Right lobe of liver (tissue), 6 donors: ENCODE measurements at regions of chr3 and their contacts with region 1.

Region 1: GRCh38 chr3:187319699-187320302 is 28.3 kb upstream of the MASP1 start:
- DNase-seq: peak in 2 of 3 donors; percentile 57 to 73
- ATAC-seq: peak; percentile 85 to 94 (median 92)
- H3K4me3 ChIP-seq: no peak overlapping the region
- H3K27ac ChIP-seq: no peak overlapping the region
- H3K4me1 ChIP-seq: peaks cover 0 to 4% (median 2%) of the 10 kb centered on the region in 4 donors
- H3K27me3 ChIP-seq: no peaks in the 10 kb centered on the region
- CTCF ChIP-seq: peak; percentile 75 to 94 (median 76)
- POLR2A ChIP-seq: no peak

Region 2: GRCh38 chr3:187210545-187211327 is 109.1 kb before region 1 on chr3:
- intact Hi-C with region 1: loop called in 1 of 2 experiments (anchors 10 kb)
- DNase-seq: no peak
- ATAC-seq: peak in 1 of 4 donors; percentile 18
- H3K4me3 ChIP-seq: no peak overlapping the region
- H3K27ac ChIP-seq: peak overlapping the region in 1 of 3 donors; percentile 20
- H3K4me1 ChIP-seq: no peaks in the 10 kb centered on the region
- H3K27me3 ChIP-seq: no peaks in the 10 kb centered on the region
- CTCF ChIP-seq: no peak
- POLR2A ChIP-seq: no peak

Region 3: GRCh38 chr3:187610981-187611511 is 291.2 kb after region 1 on chr3:
- intact Hi-C with region 1: loop called in 1 of 2 experiments (anchors 10 kb)
- DNase-seq: no peak
- ATAC-seq: no peak
- H3K4me3 ChIP-seq: no peak overlapping the region
- H3K27ac ChIP-seq: no peak overlapping the region
- H3K4me1 ChIP-seq: no peaks in the 10 kb centered on the region
- H3K27me3 ChIP-seq: no peaks in the 10 kb centered on the region
- CTCF ChIP-seq: no peak
- POLR2A ChIP-seq: no peak

Region 4: DNA sequence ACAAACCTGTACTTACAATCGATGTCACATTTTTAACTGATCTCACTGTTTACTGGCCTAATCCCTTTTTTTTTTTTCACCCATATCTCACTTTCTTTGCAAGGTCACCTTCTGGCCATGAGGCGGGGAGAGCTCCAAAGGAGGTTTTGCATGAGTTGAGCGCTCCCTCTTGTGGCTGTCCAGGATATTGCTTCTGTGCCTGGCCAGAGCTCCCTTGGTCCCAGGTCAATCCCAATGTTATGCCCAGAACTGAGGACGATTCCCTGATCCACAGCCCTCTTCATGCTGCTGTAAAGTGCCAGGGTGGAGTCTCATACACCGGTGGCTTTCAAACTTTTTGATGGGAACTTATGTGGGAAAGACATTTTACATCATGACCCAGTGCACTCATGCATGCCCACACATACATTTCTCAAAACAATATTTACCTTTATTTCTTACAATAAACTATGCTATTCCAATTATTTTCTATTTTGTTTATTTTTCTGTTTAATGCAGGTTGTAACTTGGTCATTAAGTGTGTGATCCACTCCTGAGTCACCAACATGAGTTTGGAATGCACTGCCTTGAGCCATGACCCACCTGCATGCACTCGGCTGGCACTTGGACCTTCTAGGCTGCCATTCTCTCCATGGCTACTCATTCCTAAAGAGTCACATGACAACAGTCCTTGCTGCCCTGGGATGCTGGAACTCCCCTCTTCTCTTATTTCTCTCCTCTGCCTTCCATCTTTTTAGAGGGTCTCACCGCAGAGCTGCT is 360.0 kb after region 1 on chr3:
- intact Hi-C with region 1: loop called (anchors 10 kb)
- DNase-seq: peak; percentile 74 to 84 (median 76)
- ATAC-seq: peak; percentile 98 to 99 (median 99)
- H3K4me3 ChIP-seq: no peak overlapping the region
- H3K27ac ChIP-seq: no peak overlapping the region
- H3K4me1 ChIP-seq: peaks cover 0 to 6% (median 0%) of the 10 kb centered on the region in 4 donors
- H3K27me3 ChIP-seq: no peaks in the 10 kb centered on the region
- CTCF ChIP-seq: peak; percentile 88 to 95 (median 92)
- POLR2A ChIP-seq: no peak

Region 5: DNA sequence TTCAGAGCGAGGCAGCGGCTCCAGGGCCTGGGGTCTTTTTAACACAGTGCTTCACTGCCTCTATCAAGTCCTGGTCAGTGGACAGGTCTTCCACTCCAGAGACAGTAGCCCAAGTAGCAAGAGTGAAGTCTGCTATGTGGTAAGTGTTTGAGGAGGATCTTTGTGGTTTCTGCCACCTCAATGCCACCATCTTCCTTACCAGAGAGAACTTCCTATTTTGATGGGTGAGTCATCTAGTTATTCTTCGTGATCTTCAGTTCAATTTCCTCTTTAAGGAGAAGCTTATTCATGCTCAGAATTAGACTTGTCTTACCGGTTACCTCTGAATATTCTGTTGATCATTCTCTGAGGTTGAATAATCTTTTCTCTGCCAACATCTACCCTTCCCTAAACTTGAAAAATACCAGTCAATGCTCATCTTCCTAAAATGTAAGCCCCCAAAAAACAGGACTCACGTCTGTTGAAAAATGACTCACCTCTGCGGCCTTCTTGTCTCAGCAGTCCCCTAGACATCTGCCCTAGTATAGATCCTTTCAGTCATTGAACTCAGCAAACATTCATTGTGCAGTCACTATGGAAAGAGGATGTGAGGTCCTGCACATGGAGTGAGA is 457.6 kb after region 1 on chr3:
- intact Hi-C with region 1: no loop called
- DNase-seq: no peak
- ATAC-seq: peak; percentile 55 to 68 (median 56)
- H3K4me3 ChIP-seq: no peak overlapping the region
- H3K27ac ChIP-seq: peak overlapping the region in 1 of 3 donors; percentile 14
- H3K4me1 ChIP-seq: no peaks in the 10 kb centered on the region
- H3K27me3 ChIP-seq: no peaks in the 10 kb centered on the region
- CTCF ChIP-seq: no peak
- POLR2A ChIP-seq: no peak